Activated B cell treated with CpG ODN at 0.5 μM for 24 hours (primary cell): ENCODE measurements at regions of chr1 and their contacts with region 1.

Region 1: GRCh38 chr1:150281837-150282653 is at the start of gene CIART:
- DNase-seq: peak; percentile 39
- ATAC-seq: peak; percentile 84
- H3K4me3 Mint-ChIP-seq: peak within 1 kb of the TSS; percentile 85
- H3K27ac Mint-ChIP-seq: peak within 1 kb of the TSS; percentile 67
- H3K4me1 Mint-ChIP-seq: peaks cover 20% of the 10 kb centered on the region
- H3K27me3 Mint-ChIP-seq: peaks cover 3% of the 10 kb centered on the region
- CTCF ChIP-seq: no peak
- total RNA-seq, gene CIART: 0.20 and 1.0 TPM in 2 replicates

Region 2: DNA sequence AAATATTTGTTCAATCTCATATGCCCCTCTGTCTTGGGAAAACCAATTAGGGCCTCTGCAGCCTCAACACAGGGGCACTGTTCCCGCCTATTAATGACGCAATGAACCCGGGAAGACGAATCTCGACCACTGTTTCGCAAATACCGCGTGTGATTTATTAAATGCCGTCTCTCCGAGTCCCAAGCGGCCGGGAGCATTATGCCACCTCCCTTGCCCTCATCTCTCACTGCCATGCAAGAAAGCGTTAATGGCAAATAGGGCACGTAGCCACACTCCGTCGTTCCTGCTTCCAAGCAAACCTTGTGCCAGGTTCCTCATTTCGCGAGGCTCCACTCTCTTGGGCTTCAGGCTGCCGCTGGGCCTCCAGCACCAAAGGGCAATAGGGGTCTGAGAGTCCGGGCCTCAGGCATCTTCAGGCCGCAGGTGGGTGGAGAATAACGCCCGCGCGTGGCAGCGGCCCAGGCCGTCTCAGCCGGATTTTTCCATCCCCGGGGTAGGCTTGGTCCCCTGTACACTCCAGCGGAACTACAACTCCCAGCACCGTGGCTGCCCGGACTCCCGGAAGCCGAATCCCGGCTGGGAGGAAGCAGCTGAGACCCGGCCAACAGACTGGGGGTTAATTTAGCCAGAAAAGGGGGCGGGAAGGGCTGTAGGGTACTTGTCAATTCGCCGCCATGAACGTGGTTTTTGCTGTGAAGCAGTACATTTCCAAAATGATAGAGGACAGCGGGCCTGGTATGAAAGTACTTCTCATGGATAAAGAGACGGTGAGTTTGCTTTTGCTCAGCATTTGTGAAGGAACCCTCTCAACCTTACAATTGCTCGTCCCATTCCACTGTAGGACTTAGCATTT is 214.6 kb before region 1 on chr1 and contains the start of gene VPS45:
- CTCF ChIA-PET with region 1: no interaction called
- POLR2A ChIA-PET with region 1: no interaction called
- intact Hi-C with region 1: loop called (anchors 5 kb)
- DNase-seq: peak; percentile 71
- ATAC-seq: peak; percentile 86
- H3K4me3 Mint-ChIP-seq: peak within 1 kb of the TSS; percentile 95
- H3K27ac Mint-ChIP-seq: peak within 1 kb of the TSS; percentile 95
- H3K4me1 Mint-ChIP-seq: peaks cover 31% of the 10 kb centered on the region
- H3K27me3 Mint-ChIP-seq: no peaks in the 10 kb centered on the region
- CTCF ChIP-seq: no peak
- total RNA-seq, gene VPS45: 39.0 and 46.0 TPM in 2 replicates

Region 3: GRCh38 chr1:150259758-150260669 is 22.0 kb before region 1 on chr1:
- CTCF ChIA-PET with region 1: interaction called, 34 read pairs
- POLR2A ChIA-PET with region 1: interaction called, 8 read pairs
- intact Hi-C with region 1: loop called (anchors 1 kb)
- DNase-seq: no peak
- ATAC-seq: no peak
- H3K4me3 Mint-ChIP-seq: no peak overlapping the region
- H3K27ac Mint-ChIP-seq: no peak overlapping the region
- H3K4me1 Mint-ChIP-seq: peaks cover 17% of the 10 kb centered on the region
- H3K27me3 Mint-ChIP-seq: peaks cover 33% of the 10 kb centered on the region
- CTCF ChIP-seq: no peak

Region 4: GRCh38 chr1:150268705-150269403 is 13.2 kb before region 1 on chr1 and contains the start of gene APH1A:
- CTCF ChIA-PET with region 1: interaction called, 4 read pairs
- POLR2A ChIA-PET with region 1: interaction called, 12 read pairs
- intact Hi-C with region 1: loop called (anchors 1 kb)
- DNase-seq: peak; percentile 86
- ATAC-seq: peak; percentile 97
- H3K4me3 Mint-ChIP-seq: peak within 1 kb of the TSS; percentile 100
- H3K27ac Mint-ChIP-seq: peak within 1 kb of the TSS; percentile 94
- H3K4me1 Mint-ChIP-seq: peaks cover 32% of the 10 kb centered on the region
- H3K27me3 Mint-ChIP-seq: peaks cover 4% of the 10 kb centered on the region
- CTCF ChIP-seq: no peak
- total RNA-seq, gene APH1A: 145 TPM in 2 replicates

Region 5: DNA sequence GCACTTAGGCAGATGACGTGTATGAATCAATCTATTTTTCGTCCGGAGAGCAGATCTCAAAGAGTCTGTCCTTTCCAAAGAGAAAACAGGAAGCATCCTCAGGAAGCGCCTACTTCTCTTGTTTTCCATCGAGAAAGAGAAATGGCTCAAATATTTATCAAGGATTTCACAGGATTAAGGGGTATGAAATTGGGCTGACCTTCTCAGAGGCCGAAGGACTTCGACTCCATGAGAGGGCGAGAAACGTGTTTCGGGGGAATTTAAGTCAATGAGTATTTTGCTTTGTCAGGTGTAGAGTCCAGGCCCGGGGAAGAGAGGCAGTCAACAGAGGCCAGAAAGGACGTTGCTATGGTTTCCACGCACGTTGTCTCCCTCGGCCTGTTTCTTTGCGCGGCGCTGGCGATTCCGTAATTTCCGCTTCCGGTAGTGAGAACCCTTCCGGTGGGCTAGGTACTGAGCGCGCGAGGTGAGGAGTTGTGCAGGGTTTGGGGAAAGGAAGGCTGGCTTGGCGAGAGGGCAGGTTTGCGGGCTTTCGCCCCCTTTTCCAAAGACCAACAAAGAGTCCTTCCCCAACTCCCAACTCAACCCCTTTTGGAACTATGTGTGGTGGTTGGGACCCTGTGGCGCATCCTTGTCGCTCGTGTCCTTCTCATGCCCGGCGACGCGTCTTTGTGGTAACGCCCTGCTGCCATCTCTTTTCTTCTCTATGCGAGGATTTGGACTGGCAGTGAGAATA is 11.6 kb after region 1 on chr1 and contains the start of gene MRPS21:
- CTCF ChIA-PET with region 1: interaction called, 4 read pairs
- POLR2A ChIA-PET with region 1: interaction called, 3 read pairs
- intact Hi-C with region 1: loop called (anchors 1 kb)
- DNase-seq: peak; percentile 77
- ATAC-seq: peak; percentile 97
- H3K4me3 Mint-ChIP-seq: peak within 1 kb of the TSS; percentile 94
- H3K27ac Mint-ChIP-seq: peak within 1 kb of the TSS; percentile 99
- H3K4me1 Mint-ChIP-seq: peaks cover 30% of the 10 kb centered on the region
- H3K27me3 Mint-ChIP-seq: no peaks in the 10 kb centered on the region
- CTCF ChIP-seq: no peak
- total RNA-seq, gene MRPS21: 66.8 and 69.2 TPM in 2 replicates

Region 6: DNA sequence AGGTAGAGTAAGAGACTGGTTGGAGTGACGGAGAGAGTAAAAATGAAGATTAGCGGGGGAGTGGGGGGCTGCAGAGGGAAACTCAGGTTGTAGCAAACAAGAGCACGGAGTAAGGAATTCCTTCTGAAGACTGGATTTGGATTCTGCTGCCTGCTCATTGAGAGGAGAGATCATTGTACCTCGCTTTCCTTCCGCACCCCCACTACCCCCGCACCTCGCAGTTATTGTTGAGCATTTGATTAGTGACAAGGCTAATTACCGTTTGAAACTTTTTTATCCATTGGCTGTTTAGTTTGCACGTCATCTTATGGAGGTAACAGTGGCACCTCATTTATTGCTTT is 39.8 kb after region 1 on chr1:
- CTCF ChIA-PET with region 1: no interaction called
- POLR2A ChIA-PET with region 1: no interaction called
- intact Hi-C with region 1: loop called (anchors 5 kb)
- DNase-seq: no peak
- ATAC-seq: no peak
- H3K4me3 Mint-ChIP-seq: peak overlapping the region; percentile 100
- H3K27ac Mint-ChIP-seq: peak overlapping the region; percentile 99
- H3K4me1 Mint-ChIP-seq: peaks cover 22% of the 10 kb centered on the region
- H3K27me3 Mint-ChIP-seq: peaks cover 2% of the 10 kb centered on the region
- CTCF ChIP-seq: no peak